GM12878 (cell line): ENCODE measurements at regions of chr1 and their contacts with region 1.

Region 1: DNA sequence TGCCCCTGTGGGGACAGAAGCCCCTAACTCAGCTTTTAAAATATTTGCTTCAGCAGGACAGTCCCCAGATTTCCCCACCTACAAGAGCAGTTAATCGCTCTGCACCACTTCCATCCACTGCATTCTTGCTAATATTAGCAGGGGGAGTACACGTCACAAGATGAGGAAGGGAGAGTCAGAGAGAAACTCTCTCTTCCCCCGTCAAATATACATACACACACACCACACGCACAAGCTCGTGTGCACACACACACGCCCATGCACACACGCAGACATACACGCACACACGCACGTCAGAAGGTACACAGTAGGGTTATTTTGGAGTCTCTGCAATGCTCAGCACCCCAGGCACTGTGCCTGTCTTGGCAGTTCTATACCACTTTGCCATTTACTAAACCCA is 2.1 kb downstream of the CLCA1 start:
- DNase-seq: no peak
- ATAC-seq: peak; percentile 66
- H3K4me3 ChIP-seq: no peak overlapping the region
- H3K27ac ChIP-seq: no peak overlapping the region
- H3K4me1 ChIP-seq: peaks cover 3% of the 10 kb centered on the region; the same call in 1 of the 2 replicates
- H3K27me3 ChIP-seq: no peaks in the 10 kb centered on the region; a peak in 2 of 4 replicates
- CTCF ChIP-seq: no peak
- EP300 ChIP-seq: no peak
- POLR2A ChIP-seq: no peak
- RAD21 ChIP-seq: no peak

Region 2: GRCh38 chr1:86507935-86508582 is 37.2 kb after region 1 on chr1:
- CTCF ChIA-PET with region 1: interaction called, 28 read pairs
- POLR2A ChIA-PET with region 1: no interaction called
- RAD21 ChIA-PET with region 1: no interaction called
- SMC1A ChIA-PET with region 1: interaction called, 4 read pairs
- in situ Hi-C with region 1: no loop called
- intact Hi-C with region 1: no loop called
- DNase-seq: no peak
- ATAC-seq: peak; percentile 76
- H3K4me3 ChIP-seq: no peak overlapping the region
- H3K27ac ChIP-seq: no peak overlapping the region
- H3K4me1 ChIP-seq: no peaks in the 10 kb centered on the region
- H3K27me3 ChIP-seq: peaks cover 0 to 2% of the 10 kb centered on the region in 2 experiments; a peak in 3 of 4 replicates
- CTCF ChIP-seq: peak; percentile 36 to 51 (median 47); a peak in 5 of 6 replicates
- EP300 ChIP-seq: no peak
- POLR2A ChIP-seq: no peak
- RAD21 ChIP-seq: 0 out of 2 replicates have a peak, but pooled peaks have one; percentile 34

Region 3: DNA sequence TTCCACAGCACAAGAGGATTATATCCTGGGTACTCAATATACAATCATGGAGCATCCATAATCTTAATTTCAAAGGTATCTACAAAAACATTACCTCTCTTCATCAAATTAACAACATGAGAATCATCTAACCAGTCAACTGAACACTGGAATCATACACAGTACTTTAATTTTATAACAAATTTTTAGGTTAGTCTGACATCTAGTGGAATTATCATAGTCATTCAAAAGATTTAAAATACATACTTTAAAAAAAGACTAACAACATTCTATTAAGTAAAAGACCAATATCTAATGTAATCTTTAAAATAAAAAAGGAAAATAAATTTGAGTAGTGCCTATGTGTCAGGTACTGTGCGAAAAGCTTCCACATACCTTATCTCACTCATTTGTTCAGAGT is 216.7 kb after region 1 on chr1:
- CTCF ChIA-PET with region 1: no interaction called
- POLR2A ChIA-PET with region 1: no interaction called
- RAD21 ChIA-PET with region 1: no interaction called
- SMC1A ChIA-PET with region 1: no interaction called
- in situ Hi-C with region 1: no loop called
- intact Hi-C with region 1: loop called (anchors 5 kb)
- DNase-seq: no peak
- ATAC-seq: no peak
- H3K4me3 ChIP-seq: no peak overlapping the region
- H3K27ac ChIP-seq: no peak overlapping the region
- H3K4me1 ChIP-seq: no peaks in the 10 kb centered on the region
- H3K27me3 ChIP-seq: no peaks in the 10 kb centered on the region
- CTCF ChIP-seq: no peak; a peak in 1 of 6 replicates
- EP300 ChIP-seq: no peak
- POLR2A ChIP-seq: no peak
- RAD21 ChIP-seq: no peak